Transverse colon (tissue), 4 donors: ENCODE measurements at regions of chr9 and their contacts with region 1.

Region 1: GRCh38 chr9:99178912-99179872 is 42.5 kb downstream of the ALG2 start:
- DNase-seq: no peak
- H3K4me3 ChIP-seq: no peak overlapping the region
- H3K27ac ChIP-seq: no peak overlapping the region
- H3K4me1 ChIP-seq: peaks cover 0 to 4% (median 2%) of the 10 kb centered on the region in 4 donors
- H3K27me3 ChIP-seq: no peaks in the 10 kb centered on the region
- CTCF ChIP-seq: no peak
- EP300 ChIP-seq: no peak
- POLR2A ChIP-seq: no peak

Region 2: GRCh38 chr9:97866848-97867247 is 1312.3 kb before region 1 on chr9:
- in situ Hi-C with region 1: no loop called
- intact Hi-C with region 1: no loop called
- DNase-seq: no peak
- H3K4me3 ChIP-seq: no peak overlapping the region
- H3K27ac ChIP-seq: no peak overlapping the region
- H3K4me1 ChIP-seq: no peaks in the 10 kb centered on the region
- H3K27me3 ChIP-seq: peaks cover 45% of the 10 kb centered on the region
- CTCF ChIP-seq: no peak
- EP300 ChIP-seq: no peak
- POLR2A ChIP-seq: no peak

Region 3: DNA sequence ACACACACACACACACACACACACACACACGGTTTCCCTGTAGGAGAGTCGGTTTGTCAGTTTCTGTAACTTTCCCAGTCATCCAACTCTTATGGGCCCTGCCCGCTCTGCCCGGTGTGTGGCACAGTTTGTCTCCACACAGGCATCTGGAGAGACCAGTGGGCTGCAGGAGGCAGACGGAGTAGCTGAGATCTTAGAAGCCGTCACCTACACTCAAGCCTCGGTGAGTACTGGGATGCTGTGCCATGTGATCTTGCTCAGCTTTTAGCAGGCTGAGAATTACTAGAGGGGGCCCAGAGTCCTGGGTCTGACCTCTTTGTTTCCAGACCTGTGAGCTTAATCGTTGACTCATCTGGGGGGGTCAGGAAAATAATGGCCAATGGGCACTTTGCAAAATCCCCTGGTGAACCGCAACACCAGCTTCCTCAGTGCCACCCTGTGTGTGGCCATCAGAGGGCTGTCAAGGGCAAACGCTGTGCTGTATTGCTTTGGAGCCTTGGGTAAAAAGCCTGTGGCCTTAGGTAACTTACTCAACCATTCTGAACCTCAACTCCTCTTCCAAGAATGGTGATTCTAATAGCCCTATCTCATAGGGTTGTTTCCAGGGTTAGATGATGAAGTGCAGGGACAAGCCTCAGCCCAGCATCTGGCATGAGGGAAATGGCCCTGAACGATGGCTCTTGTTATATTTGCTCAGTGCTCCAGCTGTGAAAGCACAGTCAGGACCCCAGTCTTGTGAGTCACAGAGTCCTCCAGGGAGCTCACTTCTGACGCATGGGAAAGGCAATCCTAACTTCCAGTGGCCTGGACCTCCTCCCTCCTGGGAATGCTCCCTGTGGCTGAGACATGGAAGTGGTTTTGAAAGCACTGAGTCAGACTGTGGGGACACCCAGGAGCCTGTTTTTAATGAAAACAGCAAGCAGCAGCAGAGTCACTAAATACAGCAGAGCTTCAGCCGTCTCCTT is 189.9 kb before region 1 on chr9:
- in situ Hi-C with region 1: no loop called
- intact Hi-C with region 1: no loop called
- DNase-seq: peak; percentile 47
- H3K4me3 ChIP-seq: no peak overlapping the region
- H3K27ac ChIP-seq: peak overlapping the region; percentile 44 to 73 (median 67)
- H3K4me1 ChIP-seq: peaks cover 0 to 31% (median 12%) of the 10 kb centered on the region in 4 donors
- H3K27me3 ChIP-seq: no peaks in the 10 kb centered on the region
- CTCF ChIP-seq: no peak
- EP300 ChIP-seq: no peak
- POLR2A ChIP-seq: no peak

Region 4: DNA sequence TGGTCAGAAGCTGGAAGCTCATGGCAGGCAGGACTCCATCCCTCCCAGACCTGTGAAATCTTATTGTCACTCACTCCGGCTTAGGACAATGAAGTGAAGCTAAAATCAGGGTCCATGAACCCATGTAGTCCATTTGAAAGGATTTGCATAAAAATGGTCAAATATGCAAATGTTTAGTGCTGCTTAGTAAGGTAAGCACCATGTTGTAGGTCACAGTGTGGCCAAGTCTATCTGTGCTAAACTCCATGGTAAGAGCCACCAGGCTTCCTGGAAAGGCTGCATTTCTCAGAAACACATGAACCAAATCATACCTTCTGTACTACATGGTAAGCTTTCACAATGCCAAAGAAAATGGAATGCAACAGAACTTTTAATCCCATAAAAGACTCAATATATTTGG is 36.9 kb after region 1 on chr9:
- in situ Hi-C with region 1: no loop called
- intact Hi-C with region 1: loop called (anchors 2 kb)
- DNase-seq: no peak
- H3K4me3 ChIP-seq: no peak overlapping the region
- H3K27ac ChIP-seq: no peak overlapping the region
- H3K4me1 ChIP-seq: peaks cover 15 to 20% (median 17%) of the 10 kb centered on the region in 4 donors
- H3K27me3 ChIP-seq: no peaks in the 10 kb centered on the region
- CTCF ChIP-seq: no peak
- EP300 ChIP-seq: no peak
- POLR2A ChIP-seq: no peak

Region 5: DNA sequence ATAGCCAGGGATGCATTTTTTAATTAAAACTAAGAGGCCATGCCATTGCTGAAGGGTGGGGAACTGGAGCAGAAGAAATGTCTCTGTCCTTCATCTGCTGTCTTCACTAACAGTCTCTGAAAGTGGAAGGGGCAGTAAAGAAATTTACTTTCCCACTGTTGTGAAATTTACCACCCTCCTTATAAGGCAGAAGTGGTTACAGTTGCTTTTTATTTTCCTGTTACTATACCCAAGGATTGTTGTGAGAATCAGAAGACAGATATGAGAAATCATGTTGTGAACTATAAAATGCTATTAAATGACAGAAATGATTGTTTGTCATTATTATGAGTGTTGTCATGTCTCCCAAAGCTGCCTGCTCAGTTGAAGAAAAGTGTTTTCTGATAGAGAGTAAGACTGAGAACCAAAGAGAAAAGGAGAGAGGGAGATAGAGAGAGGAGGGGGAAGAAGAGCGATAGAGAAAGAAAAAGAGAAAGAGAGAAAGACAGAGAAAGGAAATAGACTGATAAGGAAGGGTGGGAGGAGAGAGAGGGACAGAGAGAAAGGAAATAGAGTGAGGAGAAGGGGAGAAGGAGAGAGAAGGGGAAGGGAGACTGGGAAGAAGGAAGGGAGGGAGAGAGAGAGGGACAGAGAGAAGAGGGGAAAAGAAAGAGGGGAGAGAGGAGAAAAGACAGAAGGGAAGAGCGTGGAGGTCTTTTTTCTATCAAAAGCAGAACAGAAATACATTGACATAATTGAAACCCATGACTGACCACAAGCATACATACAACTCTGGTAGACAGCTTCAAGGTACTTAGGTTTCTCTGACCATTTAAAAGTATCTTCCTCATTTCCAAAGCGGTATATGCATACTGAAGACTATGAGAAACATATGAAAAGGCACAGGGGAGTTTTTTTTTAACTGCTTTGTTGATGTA is 65.4 kb after region 1 on chr9:
- in situ Hi-C with region 1: no loop called
- intact Hi-C with region 1: no loop called
- DNase-seq: no peak
- H3K4me3 ChIP-seq: no peak overlapping the region
- H3K27ac ChIP-seq: no peak overlapping the region
- H3K4me1 ChIP-seq: no peaks in the 10 kb centered on the region
- H3K27me3 ChIP-seq: no peaks in the 10 kb centered on the region
- CTCF ChIP-seq: no peak
- EP300 ChIP-seq: no peak
- POLR2A ChIP-seq: no peak